ENCODE measurements at regions of chr17 and their contacts with region 1.

Region 1: DNA sequence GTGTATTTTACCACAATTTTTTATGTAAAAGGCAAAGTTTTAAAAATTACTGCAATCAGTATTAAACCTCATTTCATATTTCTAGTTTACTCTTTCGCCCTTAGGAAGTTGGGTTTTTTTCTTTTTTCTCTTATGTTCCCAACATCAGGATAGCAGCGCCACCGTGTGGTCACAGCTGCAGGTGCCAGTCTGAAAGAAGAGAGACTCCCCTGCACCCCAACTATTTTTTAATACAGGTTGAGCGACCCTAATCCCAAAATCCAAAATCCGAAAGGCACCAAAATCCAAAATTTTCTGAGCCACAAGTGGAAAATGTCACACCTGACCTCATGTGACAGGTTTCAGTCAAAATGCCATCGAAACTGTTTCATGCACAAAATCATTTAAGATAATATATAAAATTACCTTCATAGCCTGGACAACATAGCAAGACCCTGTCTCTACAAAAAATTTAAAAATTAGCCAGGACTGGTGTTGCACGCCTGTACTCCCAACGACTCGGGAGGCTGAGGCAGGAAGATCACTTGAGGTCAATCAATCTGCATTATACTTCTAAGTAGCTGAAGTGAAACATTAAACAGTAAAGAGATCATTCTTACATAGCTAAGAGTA is 21.8 kb upstream of the ASGR2 start:
- DNase-seq: peak; percentile 62 to 86 (median 73)
- H3K4me3 ChIP-seq: no peak overlapping the region
- H3K27ac ChIP-seq: no peak overlapping the region
- H3K4me1 ChIP-seq: no peaks in the 10 kb centered on the region
- H3K27me3 ChIP-seq: no peaks in the 10 kb centered on the region
- CTCF ChIP-seq: peak; percentile 38 to 76 (median 60)
- EP300 ChIP-seq: no peak
- POLR2A ChIP-seq: no peak

Region 2: DNA sequence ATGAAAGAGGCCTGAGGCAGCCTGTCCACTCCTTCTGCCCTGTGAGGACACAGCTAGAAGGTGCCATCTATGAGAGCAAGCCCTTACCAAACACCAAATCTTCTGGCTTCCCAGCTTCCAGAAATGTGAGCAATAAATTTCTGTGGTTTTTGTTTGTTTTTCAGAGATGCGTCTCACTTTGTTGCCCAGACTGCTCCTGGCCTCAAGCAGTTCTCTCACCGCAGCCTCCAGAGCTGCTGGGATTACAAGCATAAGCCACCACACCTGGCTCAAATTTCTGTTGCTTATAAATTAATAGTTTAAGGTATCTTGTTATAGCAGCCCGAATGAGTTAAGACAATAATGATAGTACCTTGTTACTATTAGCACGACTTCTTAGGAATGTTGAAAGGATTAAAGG is 80.0 kb before region 1 on chr17:
- intact Hi-C with region 1: loop called in 2 of 4 experiments (anchors 2 to 5 kb)
- DNase-seq: no peak
- H3K4me3 ChIP-seq: no peak overlapping the region
- H3K27ac ChIP-seq: no peak overlapping the region
- H3K4me1 ChIP-seq: no peaks in the 10 kb centered on the region
- H3K27me3 ChIP-seq: no peaks in the 10 kb centered on the region
- CTCF ChIP-seq: no peak
- EP300 ChIP-seq: no peak
- POLR2A ChIP-seq: no peak

Region 3: DNA sequence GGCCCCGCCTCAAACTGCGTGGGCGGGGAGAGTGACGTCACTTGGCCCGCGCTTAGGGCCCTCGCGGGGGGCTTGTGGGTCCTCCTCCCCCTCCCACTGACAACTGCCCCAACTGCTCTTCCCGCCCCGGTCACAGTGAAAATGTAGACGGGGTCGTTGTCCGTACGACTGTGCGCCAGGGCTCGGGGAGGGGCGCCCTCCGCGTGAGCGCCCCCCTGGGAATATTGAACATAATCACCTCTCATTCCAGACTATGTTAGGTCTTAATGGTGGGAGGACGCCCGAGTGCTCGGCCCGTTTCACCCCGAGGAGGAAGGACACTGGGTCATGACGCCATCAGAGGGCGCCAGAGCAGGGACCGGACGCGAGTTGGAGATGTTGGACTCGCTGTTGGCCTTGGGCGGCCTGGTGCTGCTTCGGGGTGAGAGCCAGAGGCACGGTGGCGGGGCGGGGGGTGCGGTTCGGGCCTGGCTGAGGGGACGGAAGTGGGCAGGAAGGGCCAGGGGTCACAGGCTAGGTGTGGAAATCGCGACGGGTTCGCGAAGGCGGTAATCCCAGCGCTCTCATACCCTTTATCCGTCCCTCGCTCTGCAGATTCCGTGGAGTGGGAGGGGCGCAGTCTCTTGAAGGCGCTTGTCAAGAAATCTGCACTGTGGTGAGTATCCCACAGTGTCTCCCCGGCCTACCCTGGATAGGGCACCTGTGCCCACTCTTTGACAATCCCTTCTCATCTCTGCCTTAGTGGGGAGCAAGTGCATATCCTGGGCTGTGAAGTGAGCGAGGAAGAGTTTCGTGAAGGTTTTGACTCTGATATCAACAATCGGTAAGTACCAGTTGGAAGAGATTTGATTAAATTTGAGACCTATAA is 116.0 kb after region 1 on chr17 and contains the start of gene ELP5:
- intact Hi-C with region 1: no loop called
- DNase-seq: peak; percentile 95 to 97 (median 96)
- H3K4me3 ChIP-seq: peak within 1 kb of the TSS; percentile 96
- H3K27ac ChIP-seq: peak within 1 kb of the TSS; percentile 82 to 98
- H3K4me1 ChIP-seq: peaks cover 9% of the 10 kb centered on the region
- H3K27me3 ChIP-seq: no peaks in the 10 kb centered on the region
- CTCF ChIP-seq: peak in 1 of 3 donors; percentile 55
- EP300 ChIP-seq: no peak
- POLR2A ChIP-seq: peak; percentile 51
- total RNA-seq, gene ELP5: 18.7 to 55.7 (median 40.6) TPM